H1 (cell line): ENCODE measurements at regions of chr14 and their contacts with region 1.

Region 1: GRCh38 chr14:91388551-91388975 is 29.1 kb downstream of the CCDC88C start:
- DNase-seq: no peak
- H3K4me3 ChIP-seq: no peak overlapping the region
- H3K27ac ChIP-seq: no peak overlapping the region
- H3K4me1 ChIP-seq: peaks cover 13 to 38% (median 27%) of the 10 kb centered on the region in 4 experiments
- H3K27me3 ChIP-seq: no peaks in the 10 kb centered on the region
- CTCF ChIP-seq: no peak
- EP300 ChIP-seq: no peak
- POLR2A ChIP-seq: no peak
- RAD21 ChIP-seq: no peak

Region 2: DNA sequence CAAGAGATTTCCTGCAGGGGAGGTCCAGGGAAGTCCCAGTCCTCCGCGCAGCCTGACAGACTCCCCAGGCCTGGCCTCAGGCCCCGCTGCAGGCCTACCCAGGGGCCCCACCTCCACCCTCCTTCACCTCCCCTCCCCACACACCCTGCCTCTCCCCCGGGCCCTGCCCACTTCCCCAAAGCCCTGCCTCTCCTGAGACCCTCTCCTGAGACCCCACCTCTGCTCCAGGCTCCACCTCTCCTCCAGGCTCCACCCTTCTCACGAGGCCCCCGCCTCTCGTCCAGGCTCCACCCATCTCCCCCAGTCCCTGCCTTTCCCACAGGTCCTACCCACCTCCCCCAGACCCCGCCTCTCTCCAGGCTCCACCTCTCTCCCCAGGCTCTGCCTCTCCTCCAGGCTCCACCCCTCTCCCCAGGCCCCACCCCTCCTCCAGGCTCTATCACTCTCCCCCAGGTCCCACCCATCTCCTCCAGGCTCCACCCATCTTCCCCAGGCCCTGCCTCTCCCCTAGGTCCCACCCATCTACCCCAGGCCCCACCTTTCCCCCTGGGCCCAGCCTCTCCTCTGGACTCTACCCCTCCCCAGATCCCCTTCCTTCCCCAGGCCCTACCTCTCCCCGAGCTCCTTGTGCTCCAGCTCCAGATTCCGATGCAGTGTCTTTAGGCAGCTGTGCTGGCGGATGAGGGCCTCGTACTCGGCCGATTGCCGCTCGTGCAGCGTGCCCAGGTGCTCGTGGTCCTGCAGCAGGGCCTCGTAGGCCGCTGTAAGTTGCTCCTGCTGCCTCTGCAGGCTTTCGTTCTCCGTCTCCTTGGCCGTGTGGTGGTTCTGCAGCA is 85.3 kb before region 1 on chr14:
- CTCF ChIA-PET with region 1: no interaction called
- POLR2A ChIA-PET with region 1: no interaction called
- DNase-seq: peak; percentile 98 to 100
- H3K4me3 ChIP-seq: peak overlapping the region in 1 of 4 experiments; percentile 45; a peak in 4 of 8 replicates
- H3K27ac ChIP-seq: no peak overlapping the region; the same call in 1 of the 2 replicates
- H3K4me1 ChIP-seq: peaks cover 7 to 31% (median 23%) of the 10 kb centered on the region in 4 experiments; a peak in 6 of 7 replicates
- H3K27me3 ChIP-seq: no peaks in the 10 kb centered on the region
- CTCF ChIP-seq: no peak
- EP300 ChIP-seq: no peak
- POLR2A ChIP-seq: peak in 1 of 2 experiments; percentile 54; a peak in 1 of 3 replicates
- RAD21 ChIP-seq: no peak

Region 3: DNA sequence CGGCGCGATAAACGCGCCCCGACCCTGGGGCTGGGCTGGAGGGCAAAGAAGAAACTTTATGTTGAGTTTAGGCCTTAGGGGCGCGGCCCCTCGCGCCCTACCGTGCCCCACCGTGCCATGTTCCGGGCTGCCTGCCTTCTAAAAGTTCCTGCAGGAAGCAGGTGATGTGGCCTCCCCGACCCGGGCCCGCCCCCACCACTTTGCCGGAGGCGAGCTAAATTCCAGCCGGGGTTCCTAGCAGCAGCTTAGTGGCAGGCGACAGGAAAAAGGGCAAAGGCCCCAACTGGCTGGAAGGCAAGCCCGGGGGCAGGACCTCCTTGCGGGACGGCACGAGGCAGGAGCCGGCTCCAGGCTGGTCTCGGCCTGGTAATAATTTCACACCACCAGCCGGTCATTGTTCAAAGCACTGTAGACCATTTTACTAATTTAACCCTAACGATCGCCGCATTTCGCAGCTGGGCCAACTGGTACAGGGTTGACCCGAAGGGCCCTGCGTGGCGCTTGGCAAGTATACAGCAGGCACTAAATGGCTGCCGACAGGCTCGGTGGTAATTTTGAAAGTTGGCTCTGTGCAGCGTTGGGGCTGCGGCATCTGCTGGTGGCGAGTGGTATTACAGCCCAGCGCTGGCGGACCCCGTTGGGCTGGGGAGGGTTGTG is 30.0 kb after region 1 on chr14:
- CTCF ChIA-PET with region 1: interaction called, 10 read pairs
- POLR2A ChIA-PET with region 1: interaction called, 66 read pairs
- DNase-seq: peak; percentile 39 to 96
- H3K4me3 ChIP-seq: peak overlapping the region; percentile 35 to 92 (median 63)
- H3K27ac ChIP-seq: no peak overlapping the region
- H3K4me1 ChIP-seq: peaks cover 7 to 26% (median 13%) of the 10 kb centered on the region in 4 experiments; a peak in 6 of 7 replicates
- H3K27me3 ChIP-seq: peaks cover 0 to 6% (median 3%) of the 10 kb centered on the region in 4 experiments; a peak in 2 of 7 replicates
- CTCF ChIP-seq: peak; percentile 90 to 92 (median 91)
- EP300 ChIP-seq: no peak
- POLR2A ChIP-seq: no peak
- RAD21 ChIP-seq: peak; percentile 90 to 91